Naive thymus-derived CD4-positive, alpha-beta T cell (primary cell): ENCODE measurements at regions of chr2 and their contacts with region 1.

Region 1: GRCh38 chr2:191013932-191014652 is at the start of gene STAT1:
- DNase-seq: peak; percentile 93 to 99 (median 97)
- ATAC-seq: peak; percentile 97
- H3K4me3 ChIP-seq: peak within 1 kb of the TSS; percentile 69
- H3K4me3 Mint-ChIP-seq: no peak within 1 kb of the TSS
- H3K27ac ChIP-seq: peak within 1 kb of the TSS; percentile 87
- H3K27ac Mint-ChIP-seq: no peak within 1 kb of the TSS
- H3K4me1 ChIP-seq: peaks cover 41 to 48% of the 10 kb centered on the region in 2 donors
- H3K4me1 Mint-ChIP-seq: peaks cover 23 to 51% (median 42%) of the 10 kb centered on the region in 7 donors
- H3K27me3 ChIP-seq: no peaks in the 10 kb centered on the region
- H3K27me3 Mint-ChIP-seq: no peaks in the 10 kb centered on the region
- total RNA-seq, gene STAT1: 74.1 to 1,177 (median 89.6) TPM

Region 2: DNA sequence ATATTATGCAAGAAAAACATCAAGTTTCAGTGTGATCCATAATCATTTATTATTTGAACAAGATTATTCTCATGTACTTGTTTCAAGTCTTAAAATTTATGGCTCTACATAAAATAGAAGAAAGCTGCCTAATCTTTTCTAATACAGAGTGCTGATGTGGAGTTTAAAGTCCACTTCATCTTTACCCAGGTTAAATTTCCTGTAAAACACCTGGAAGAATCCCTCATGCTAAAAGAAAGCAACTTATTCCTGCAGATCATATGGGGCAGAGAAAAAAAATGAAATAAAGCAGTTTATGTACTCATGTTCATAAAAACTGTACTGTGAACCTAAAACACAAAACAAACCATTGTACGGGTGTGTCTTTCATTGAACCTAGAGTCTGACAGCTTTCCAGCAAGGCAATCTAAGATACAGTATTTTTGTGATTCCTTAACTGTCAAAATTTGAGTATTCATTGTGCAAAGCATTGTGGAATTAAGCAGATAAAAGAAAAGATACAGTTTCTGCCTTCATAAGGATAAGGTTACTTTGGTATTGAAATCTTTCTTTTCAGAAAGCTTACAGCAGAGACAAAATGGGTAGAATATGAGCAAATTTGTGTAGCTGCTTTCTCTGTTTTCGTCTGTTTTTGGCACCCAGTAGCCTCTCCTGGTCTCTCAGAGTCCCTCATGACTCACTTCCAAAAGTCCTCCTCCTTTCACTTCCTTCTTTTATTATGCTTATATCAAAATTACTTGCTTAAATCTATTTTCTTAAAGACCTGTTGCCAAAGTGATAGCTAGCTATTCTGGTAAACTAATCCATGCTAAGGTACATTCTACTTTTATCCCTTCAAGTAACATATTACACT is 160.3 kb before region 1 on chr2:
- CTCF ChIA-PET with region 1: no interaction called
- POLR2A ChIA-PET with region 1: no interaction called
- intact Hi-C with region 1: loop called in 1 of 2 experiments (anchors 1 kb)
- DNase-seq: no peak
- ATAC-seq: no peak
- H3K4me3 ChIP-seq: no peak overlapping the region
- H3K4me3 Mint-ChIP-seq: no peak overlapping the region
- H3K27ac ChIP-seq: no peak overlapping the region
- H3K27ac Mint-ChIP-seq: no peak overlapping the region
- H3K4me1 ChIP-seq: no peaks in the 10 kb centered on the region
- H3K4me1 Mint-ChIP-seq: no peaks in the 10 kb centered on the region
- H3K27me3 ChIP-seq: no peaks in the 10 kb centered on the region
- H3K27me3 Mint-ChIP-seq: no peaks in the 10 kb centered on the region

Region 3: DNA sequence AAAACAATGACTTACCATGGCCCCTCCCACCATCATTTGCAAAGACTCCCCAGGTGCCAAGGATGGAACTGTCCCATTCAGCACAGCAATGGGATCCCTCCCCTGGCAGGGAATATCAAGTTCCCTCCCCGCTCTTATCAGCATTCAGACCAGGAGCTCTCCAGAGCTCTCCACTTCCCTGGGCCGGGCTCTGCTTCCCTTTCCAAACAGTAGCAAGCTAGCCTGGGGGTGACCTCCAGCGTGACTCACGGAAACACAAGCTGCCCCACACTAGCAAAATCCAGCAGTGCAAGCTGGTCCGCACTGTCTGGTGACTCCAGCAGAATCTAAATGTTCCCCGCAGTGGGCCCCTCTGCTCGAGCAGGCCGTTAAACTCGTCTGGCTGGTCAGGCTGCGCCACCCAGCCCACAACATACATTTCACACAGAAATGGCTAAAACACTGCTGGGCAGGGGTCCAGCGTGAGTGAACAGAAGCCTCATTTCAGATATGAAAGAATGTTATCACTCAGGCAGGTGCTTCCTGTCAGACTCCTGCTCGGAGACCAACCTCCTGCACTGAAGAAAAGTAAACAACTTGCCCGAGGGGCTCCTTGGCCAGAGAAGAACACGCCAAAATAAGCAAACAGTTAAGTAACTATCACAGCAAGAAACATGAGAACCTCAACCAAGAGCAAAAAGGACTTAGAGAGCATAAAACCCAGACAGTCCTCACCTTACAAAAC is 34.0 kb before region 1 on chr2:
- CTCF ChIA-PET with region 1: no interaction called
- POLR2A ChIA-PET with region 1: interaction called, 9 read pairs
- intact Hi-C with region 1: loop called in 1 of 2 experiments (anchors 5 kb)
- DNase-seq: no peak
- ATAC-seq: no peak
- H3K4me3 ChIP-seq: no peak overlapping the region
- H3K4me3 Mint-ChIP-seq: peak overlapping the region in 9 of 10 donors; percentile 16 to 79 (median 55)
- H3K27ac ChIP-seq: peak overlapping the region; percentile 54
- H3K27ac Mint-ChIP-seq: peak overlapping the region; percentile 62 to 98 (median 92)
- H3K4me1 ChIP-seq: peaks cover 0 to 31% of the 10 kb centered on the region in 2 donors
- H3K4me1 Mint-ChIP-seq: peaks cover 15 to 77% (median 63%) of the 10 kb centered on the region in 7 donors
- H3K27me3 ChIP-seq: no peaks in the 10 kb centered on the region
- H3K27me3 Mint-ChIP-seq: no peaks in the 10 kb centered on the region

Region 4: GRCh38 chr2:190996338-190996946 is 17.6 kb before region 1 on chr2:
- CTCF ChIA-PET with region 1: interaction called, 8 read pairs
- POLR2A ChIA-PET with region 1: interaction called, 6 read pairs
- intact Hi-C with region 1: loop called (anchors 1 to 2 kb)
- DNase-seq: peak in 6 of 9 donors; percentile 28 to 52 (median 35)
- ATAC-seq: peak; percentile 83
- H3K4me3 ChIP-seq: no peak overlapping the region
- H3K4me3 Mint-ChIP-seq: peak overlapping the region in 1 of 10 donors; percentile 28
- H3K27ac ChIP-seq: peak overlapping the region; percentile 34
- H3K27ac Mint-ChIP-seq: peak overlapping the region; percentile 52 to 92 (median 81)
- H3K4me1 ChIP-seq: peaks cover 3 to 7% of the 10 kb centered on the region in 2 donors
- H3K4me1 Mint-ChIP-seq: peaks cover 28 to 80% (median 55%) of the 10 kb centered on the region in 7 donors
- H3K27me3 ChIP-seq: no peaks in the 10 kb centered on the region
- H3K27me3 Mint-ChIP-seq: no peaks in the 10 kb centered on the region

Region 5: DNA sequence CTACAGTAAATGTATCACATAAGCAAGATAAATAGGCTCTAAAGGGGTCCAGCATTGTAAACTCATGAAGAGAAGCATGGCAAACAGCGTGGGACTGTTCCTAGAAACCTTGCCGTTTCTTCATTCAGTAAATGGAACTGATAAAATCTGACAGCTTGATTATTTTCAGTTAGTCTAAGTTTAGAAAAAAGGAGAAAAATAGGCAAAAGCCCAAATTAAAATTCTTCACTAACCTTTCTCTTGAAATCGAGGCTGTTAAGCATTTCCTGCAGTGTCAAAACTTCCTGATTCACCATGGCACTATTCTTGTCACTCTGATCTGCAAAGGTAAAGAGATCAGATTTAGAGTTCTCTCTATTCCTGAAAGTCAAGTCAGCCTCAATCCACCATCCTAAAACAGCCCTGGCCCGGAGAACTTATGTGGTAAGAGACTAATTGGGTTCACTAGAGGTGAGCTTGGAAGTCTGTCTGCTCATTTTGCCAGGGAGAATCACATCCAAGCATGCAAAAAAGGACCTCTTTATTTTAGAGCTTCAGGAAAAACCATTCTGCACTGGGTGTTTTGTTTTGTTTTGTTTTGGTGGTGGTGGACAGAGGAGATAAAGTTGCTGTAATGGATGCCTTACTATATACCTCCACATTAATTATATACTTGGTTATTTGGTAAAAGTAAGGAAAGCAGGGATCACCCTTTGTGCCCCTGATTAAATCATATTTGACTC is 52.3 kb after region 1 on chr2:
- CTCF ChIA-PET with region 1: no interaction called
- POLR2A ChIA-PET with region 1: interaction called, 3 read pairs
- intact Hi-C with region 1: loop called in 1 of 2 experiments (anchors 2 kb)
- DNase-seq: peak in 2 of 9 donors; percentile 20 to 26
- ATAC-seq: peak; percentile 46
- H3K4me3 ChIP-seq: no peak overlapping the region
- H3K4me3 Mint-ChIP-seq: peak overlapping the region; percentile 42 to 87 (median 67)
- H3K27ac ChIP-seq: peak overlapping the region; percentile 60
- H3K27ac Mint-ChIP-seq: peak overlapping the region; percentile 51 to 95 (median 89)
- H3K4me1 ChIP-seq: peaks cover 53 to 67% of the 10 kb centered on the region in 2 donors
- H3K4me1 Mint-ChIP-seq: peaks cover 51 to 93% (median 88%) of the 10 kb centered on the region in 7 donors
- H3K27me3 ChIP-seq: no peaks in the 10 kb centered on the region
- H3K27me3 Mint-ChIP-seq: no peaks in the 10 kb centered on the region

Region 6: GRCh38 chr2:191617575-191617974 is 603.5 kb after region 1 on chr2:
- CTCF ChIA-PET with region 1: no interaction called
- POLR2A ChIA-PET with region 1: no interaction called
- intact Hi-C with region 1: no loop called
- DNase-seq: peak in 8 of 9 donors; percentile 47 to 89 (median 84)
- ATAC-seq: peak; percentile 92
- H3K4me3 ChIP-seq: peak overlapping the region; percentile 11
- H3K4me3 Mint-ChIP-seq: peak overlapping the region; percentile 0 to 71 (median 40)
- H3K27ac ChIP-seq: peak overlapping the region; percentile 84
- H3K27ac Mint-ChIP-seq: peak overlapping the region; percentile 80 to 98 (median 89)
- H3K4me1 ChIP-seq: peaks cover 21 to 22% of the 10 kb centered on the region in 2 donors
- H3K4me1 Mint-ChIP-seq: peaks cover 31 to 59% (median 51%) of the 10 kb centered on the region in 7 donors
- H3K27me3 ChIP-seq: no peaks in the 10 kb centered on the region
- H3K27me3 Mint-ChIP-seq: no peaks in the 10 kb centered on the region